ENCODE measurements at regions of chr2 and their contacts with region 1.

Region 1: DNA sequence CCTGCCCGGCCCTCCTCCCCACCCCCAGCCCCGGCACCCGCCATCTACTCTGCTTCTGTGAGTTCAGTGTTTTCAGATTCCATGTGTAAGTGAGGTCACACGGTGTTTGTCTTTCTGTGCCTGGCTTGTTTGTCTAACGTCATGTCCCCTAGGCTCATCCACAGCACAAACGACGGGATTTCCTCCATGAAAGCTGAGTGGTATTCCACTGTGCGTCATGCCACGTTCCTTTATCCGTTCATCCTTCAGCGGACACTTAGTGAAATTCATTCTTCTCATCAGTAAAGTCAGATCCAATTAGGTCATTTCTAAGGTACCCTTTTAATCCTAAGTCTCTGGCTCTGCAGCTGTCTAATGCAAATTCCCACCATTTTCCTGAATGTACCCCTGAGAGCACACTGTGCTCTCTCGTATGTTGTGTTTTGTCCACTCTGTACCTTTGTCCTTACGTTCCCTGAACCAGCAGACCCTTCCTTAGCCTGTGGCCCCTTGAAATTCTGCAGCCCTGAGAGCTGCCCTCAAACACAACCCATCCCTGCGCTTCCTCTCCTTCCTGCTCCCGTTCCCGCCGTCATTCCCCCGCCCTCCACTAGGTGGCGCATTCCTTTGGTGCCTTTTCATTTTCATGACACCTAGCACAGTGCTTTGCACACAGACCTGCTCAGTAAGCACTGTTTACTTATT is 44.1 kb downstream of the TRAPPC12 start:
- DNase-seq: peak; percentile 46 to 82 (median 61)
- ATAC-seq: peak; percentile 85
- H3K4me3 ChIP-seq: no peak overlapping the region
- H3K4me3 Mint-ChIP-seq: no peak overlapping the region
- H3K27ac ChIP-seq: no peak overlapping the region
- H3K27ac Mint-ChIP-seq: peak overlapping the region in 6 of 9 donors; percentile 33 to 85 (median 66)
- H3K4me1 ChIP-seq: no peaks in the 10 kb centered on the region
- H3K4me1 Mint-ChIP-seq: peaks cover 0 to 13% (median 6%) of the 10 kb centered on the region in 7 donors
- H3K27me3 ChIP-seq: no peaks in the 10 kb centered on the region
- H3K27me3 Mint-ChIP-seq: no peaks in the 10 kb centered on the region

Region 2: GRCh38 chr2:3442185-3442584 is 18.6 kb after region 1 on chr2:
- CTCF ChIA-PET with region 1: interaction called, 11 read pairs
- POLR2A ChIA-PET with region 1: no interaction called
- intact Hi-C with region 1: no loop called
- DNase-seq: no peak
- ATAC-seq: no peak
- H3K4me3 ChIP-seq: no peak overlapping the region
- H3K4me3 Mint-ChIP-seq: no peak overlapping the region
- H3K27ac ChIP-seq: no peak overlapping the region
- H3K27ac Mint-ChIP-seq: peak overlapping the region in 1 of 9 donors; percentile 12
- H3K4me1 ChIP-seq: no peaks in the 10 kb centered on the region
- H3K4me1 Mint-ChIP-seq: peaks cover 4 to 40% (median 31%) of the 10 kb centered on the region in 7 donors
- H3K27me3 ChIP-seq: no peaks in the 10 kb centered on the region
- H3K27me3 Mint-ChIP-seq: no peaks in the 10 kb centered on the region

Region 3: DNA sequence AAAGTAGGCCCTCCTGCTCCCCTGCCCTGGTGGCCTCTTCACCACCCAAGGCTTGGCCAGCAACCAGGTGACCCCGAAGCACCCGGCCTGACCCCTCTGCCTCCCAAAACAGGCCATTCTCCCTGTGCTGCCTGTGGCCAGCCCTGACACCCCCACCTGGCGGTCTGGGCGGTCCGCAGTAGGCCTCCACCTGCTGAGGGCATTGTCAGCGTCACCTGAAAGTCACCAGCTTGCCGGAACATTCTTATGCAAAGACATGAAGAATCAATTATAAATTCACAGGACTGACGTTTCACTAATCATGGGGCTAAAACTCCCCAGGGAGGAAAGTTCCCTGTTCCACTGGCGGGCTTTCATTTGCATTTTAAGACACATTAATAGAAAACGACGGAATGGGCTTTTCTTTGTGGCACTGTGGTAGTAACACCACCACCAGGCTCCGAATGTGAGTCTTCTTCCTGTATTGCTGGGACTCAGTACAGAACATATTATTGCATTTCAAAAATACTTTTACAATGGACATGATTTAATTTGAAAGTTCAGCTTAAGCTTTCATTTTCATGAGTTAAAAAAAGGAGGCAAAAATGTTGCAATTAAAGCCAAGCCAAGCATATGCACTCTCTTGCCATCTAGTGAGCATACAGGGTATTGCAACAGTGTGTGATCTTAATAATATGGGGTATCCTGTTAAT is 38.3 kb after region 1 on chr2:
- CTCF ChIA-PET with region 1: interaction called, 5 read pairs
- POLR2A ChIA-PET with region 1: no interaction called
- intact Hi-C with region 1: loop called (anchors 1 to 2 kb)
- DNase-seq: peak in 6 of 9 donors; percentile 27 to 64 (median 52)
- ATAC-seq: peak; percentile 80
- H3K4me3 ChIP-seq: no peak overlapping the region
- H3K4me3 Mint-ChIP-seq: peak overlapping the region in 7 of 10 donors; percentile 39 to 75 (median 51)
- H3K27ac ChIP-seq: peak overlapping the region; percentile 49
- H3K27ac Mint-ChIP-seq: peak overlapping the region in 8 of 9 donors; percentile 38 to 89 (median 77)
- H3K4me1 ChIP-seq: peaks cover 0 to 5% of the 10 kb centered on the region in 2 donors
- H3K4me1 Mint-ChIP-seq: peaks cover 4 to 25% (median 14%) of the 10 kb centered on the region in 7 donors
- H3K27me3 ChIP-seq: no peaks in the 10 kb centered on the region
- H3K27me3 Mint-ChIP-seq: no peaks in the 10 kb centered on the region

Region 4: GRCh38 chr2:4662161-4662779 is 1238.6 kb after region 1 on chr2:
- CTCF ChIA-PET with region 1: no interaction called
- POLR2A ChIA-PET with region 1: no interaction called
- intact Hi-C with region 1: no loop called
- DNase-seq: no peak
- ATAC-seq: no peak
- H3K4me3 ChIP-seq: no peak overlapping the region
- H3K4me3 Mint-ChIP-seq: no peak overlapping the region
- H3K27ac ChIP-seq: no peak overlapping the region
- H3K27ac Mint-ChIP-seq: no peak overlapping the region
- H3K4me1 ChIP-seq: no peaks in the 10 kb centered on the region
- H3K4me1 Mint-ChIP-seq: no peaks in the 10 kb centered on the region
- H3K27me3 ChIP-seq: no peaks in the 10 kb centered on the region
- H3K27me3 Mint-ChIP-seq: peaks cover 0 to 4% (median 0%) of the 10 kb centered on the region in 5 donors

Measured in naive thymus-derived CD4-positive, alpha-beta T cell (primary cell).